ENCODE measurements at regions of chr7 and their contacts with region 1.

Region 1: DNA sequence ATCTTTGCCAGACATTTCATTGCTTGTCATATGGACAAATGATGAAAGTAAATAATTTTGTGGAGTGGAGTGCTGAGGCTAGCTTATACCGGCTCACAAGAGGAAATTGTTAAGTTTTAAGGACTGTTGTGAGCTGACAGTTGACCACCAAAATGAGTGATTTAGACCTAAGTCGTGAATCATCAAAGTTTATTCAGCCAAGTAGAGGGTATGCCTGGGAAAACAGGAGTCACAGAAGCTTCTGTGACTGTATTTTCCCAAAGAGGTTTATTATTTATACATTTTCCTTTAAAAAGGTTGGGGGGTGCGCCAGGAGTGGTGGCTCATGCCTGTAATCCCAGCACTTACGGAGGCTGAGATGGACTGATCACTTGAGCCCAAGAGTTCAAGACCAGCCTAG is 21.8 kb downstream of the MRPS24 start:
- DNase-seq: no peak
- ATAC-seq: no peak
- H3K4me3 Mint-ChIP-seq: no peak overlapping the region
- H3K27ac Mint-ChIP-seq: no peak overlapping the region
- H3K4me1 Mint-ChIP-seq: peaks cover 6% of the 10 kb centered on the region
- H3K27me3 Mint-ChIP-seq: no peaks in the 10 kb centered on the region
- CTCF ChIP-seq: no peak

Region 2: GRCh38 chr7:43612599-43613589 is 234.6 kb before region 1 on chr7:
- CTCF ChIA-PET with region 1: no interaction called
- POLR2A ChIA-PET with region 1: no interaction called
- DNase-seq: no peak
- ATAC-seq: no peak
- H3K4me3 Mint-ChIP-seq: no peak overlapping the region
- H3K27ac Mint-ChIP-seq: 0 out of 2 replicates have a peak overlapping the region, but pooled peaks have one; percentile 6
- H3K4me1 Mint-ChIP-seq: no peaks in the 10 kb centered on the region
- H3K27me3 Mint-ChIP-seq: no peaks in the 10 kb centered on the region
- CTCF ChIP-seq: no peak

Region 3: GRCh38 chr7:43729214-43729923 is 118.1 kb before region 1 on chr7 and contains the start of gene COA1:
- CTCF ChIA-PET with region 1: no interaction called
- POLR2A ChIA-PET with region 1: no interaction called
- DNase-seq: peak; percentile 74
- ATAC-seq: peak; percentile 97
- H3K4me3 Mint-ChIP-seq: peak within 1 kb of the TSS; percentile 96
- H3K27ac Mint-ChIP-seq: peak within 1 kb of the TSS; percentile 90
- H3K4me1 Mint-ChIP-seq: peaks cover 20% of the 10 kb centered on the region
- H3K27me3 Mint-ChIP-seq: no peaks in the 10 kb centered on the region
- CTCF ChIP-seq: no peak
- total RNA-seq, gene COA1: 132 to 148 TPM (median 146 TPM) in 3 replicates

Region 4: DNA sequence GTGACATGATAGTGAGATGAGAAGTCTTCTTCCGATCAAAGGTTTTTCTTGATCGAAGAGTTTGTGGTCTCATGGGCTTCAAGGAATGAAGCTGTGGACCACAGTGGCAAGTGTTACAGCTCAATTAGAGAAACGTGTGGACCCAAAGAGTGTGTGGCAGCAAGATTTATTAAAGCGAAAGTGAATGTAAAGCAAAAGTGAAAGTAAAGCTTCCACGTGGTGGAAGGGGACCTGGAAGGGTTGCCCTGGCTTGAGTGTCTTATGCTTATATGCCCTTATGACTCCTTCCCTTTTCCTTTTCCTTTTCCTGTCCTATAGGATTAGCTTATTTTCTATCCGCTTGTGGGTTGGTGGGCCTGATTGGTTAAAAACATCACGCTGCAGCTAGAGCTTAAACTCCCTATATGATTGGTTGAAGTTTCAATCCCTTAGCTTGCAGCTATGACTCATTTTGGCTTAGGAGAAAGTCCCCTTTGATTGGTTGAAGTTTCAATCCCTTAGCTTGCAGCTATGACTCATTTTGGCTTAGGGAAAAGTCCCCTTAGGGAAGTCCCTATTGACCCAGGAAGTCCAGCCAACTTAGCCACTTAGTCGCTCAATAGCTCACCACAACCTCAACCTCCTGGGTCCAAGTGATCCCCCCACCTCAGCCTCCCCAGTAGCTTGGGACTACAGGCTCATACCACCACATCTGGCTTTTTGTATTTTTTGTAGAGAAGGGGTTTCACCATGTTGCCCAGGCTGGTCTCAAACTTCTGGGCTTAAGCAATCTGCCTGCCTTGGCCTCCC is 12.8 kb before region 1 on chr7:
- CTCF ChIA-PET with region 1: interaction called, 11 read pairs
- POLR2A ChIA-PET with region 1: no interaction called
- DNase-seq: no peak
- ATAC-seq: no peak
- H3K4me3 Mint-ChIP-seq: no peak overlapping the region
- H3K27ac Mint-ChIP-seq: no peak overlapping the region
- H3K4me1 Mint-ChIP-seq: peaks cover 5% of the 10 kb centered on the region; the same call in 1 of the 2 replicates
- H3K27me3 Mint-ChIP-seq: no peaks in the 10 kb centered on the region
- CTCF ChIP-seq: no peak